ENCODE measurements at regions of chr22 and their contacts with region 1.

Region 1: DNA sequence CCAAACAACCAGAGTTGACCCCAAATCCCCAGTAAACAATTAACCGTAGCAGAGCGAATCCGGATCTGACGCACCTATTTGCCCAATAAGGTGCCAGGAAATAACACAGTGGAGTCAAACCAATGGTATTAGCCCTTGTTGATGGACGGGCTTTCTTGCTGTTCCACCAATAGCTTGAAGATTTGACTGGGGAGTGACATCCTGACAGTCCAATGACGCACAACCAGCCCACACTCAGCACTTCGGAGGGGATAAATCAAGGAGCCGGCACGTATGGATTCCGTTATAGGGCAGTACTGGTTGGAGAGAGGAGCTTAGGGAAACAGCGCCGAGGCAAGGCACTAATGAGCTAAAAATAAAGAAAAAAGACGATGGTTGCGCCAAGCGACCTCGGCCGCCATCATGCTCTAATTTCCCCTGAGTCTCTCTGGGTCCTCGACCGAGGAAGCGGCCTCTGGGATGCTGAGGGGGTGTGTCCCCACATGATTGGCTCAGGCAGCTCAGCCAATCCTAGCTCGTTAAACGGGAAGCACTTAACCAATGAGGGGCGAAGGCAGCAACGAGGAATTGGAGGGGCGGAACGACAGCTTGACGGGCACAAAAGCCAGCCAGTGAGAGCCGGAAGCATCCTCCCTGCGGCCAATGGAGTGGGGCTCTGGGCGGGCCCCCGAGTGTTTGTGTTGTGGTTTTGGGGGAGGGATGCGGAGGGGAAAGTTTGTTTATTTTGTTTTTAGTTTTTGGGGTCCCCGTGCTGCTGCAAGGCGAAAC is 49.5 kb downstream of the FAM83F start:
- DNase-seq: peak; percentile 94 to 99 (median 98)
- ATAC-seq: peak; percentile 84 to 89 (median 86)
- H3K4me3 ChIP-seq: peak overlapping the region; percentile 77 to 85
- H3K4me3 Mint-ChIP-seq: peak overlapping the region; percentile 90 to 96 (median 93)
- H3K27ac ChIP-seq: peak overlapping the region; percentile 96
- H3K27ac Mint-ChIP-seq: peak overlapping the region; percentile 100
- H3K4me1 ChIP-seq: peaks cover 18 to 31% of the 10 kb centered on the region in 2 experiments
- H3K4me1 Mint-ChIP-seq: peaks cover 38 to 40% (median 40%) of the 10 kb centered on the region in 3 donors
- H3K27me3 ChIP-seq: peaks cover 0 to 11% of the 10 kb centered on the region in 2 experiments
- H3K27me3 Mint-ChIP-seq: peaks cover 7% of the 10 kb centered on the region in 2 donors

Region 2: GRCh38 chr22:39520054-39520891 is 524.0 kb before region 1 on chr22 and contains the start of gene ATF4:
- CTCF ChIA-PET with region 1: interaction called in 1 of 2 experiments, 9 read pairs
- POLR2A ChIA-PET with region 1: interaction called in 1 of 2 experiments, 29 read pairs
- DNase-seq: peak; percentile 93 to 99 (median 96)
- ATAC-seq: peak; percentile 90 to 92 (median 91)
- H3K4me3 ChIP-seq: peak within 1 kb of the TSS; percentile 89 to 99
- H3K4me3 Mint-ChIP-seq: peak within 1 kb of the TSS; percentile 85 to 95 (median 94)
- H3K27ac ChIP-seq: peak within 1 kb of the TSS; percentile 83
- H3K27ac Mint-ChIP-seq: peak within 1 kb of the TSS; percentile 96 to 98
- H3K4me1 ChIP-seq: peaks cover 24 to 53% of the 10 kb centered on the region in 2 experiments
- H3K4me1 Mint-ChIP-seq: peaks cover 40 to 52% (median 51%) of the 10 kb centered on the region in 3 donors
- H3K27me3 ChIP-seq: no peaks in the 10 kb centered on the region
- H3K27me3 Mint-ChIP-seq: peaks cover 0 to 2% of the 10 kb centered on the region in 2 donors
- total RNA-seq, gene ATF4: 236 to 371 (median 327) TPM

Region 3: DNA sequence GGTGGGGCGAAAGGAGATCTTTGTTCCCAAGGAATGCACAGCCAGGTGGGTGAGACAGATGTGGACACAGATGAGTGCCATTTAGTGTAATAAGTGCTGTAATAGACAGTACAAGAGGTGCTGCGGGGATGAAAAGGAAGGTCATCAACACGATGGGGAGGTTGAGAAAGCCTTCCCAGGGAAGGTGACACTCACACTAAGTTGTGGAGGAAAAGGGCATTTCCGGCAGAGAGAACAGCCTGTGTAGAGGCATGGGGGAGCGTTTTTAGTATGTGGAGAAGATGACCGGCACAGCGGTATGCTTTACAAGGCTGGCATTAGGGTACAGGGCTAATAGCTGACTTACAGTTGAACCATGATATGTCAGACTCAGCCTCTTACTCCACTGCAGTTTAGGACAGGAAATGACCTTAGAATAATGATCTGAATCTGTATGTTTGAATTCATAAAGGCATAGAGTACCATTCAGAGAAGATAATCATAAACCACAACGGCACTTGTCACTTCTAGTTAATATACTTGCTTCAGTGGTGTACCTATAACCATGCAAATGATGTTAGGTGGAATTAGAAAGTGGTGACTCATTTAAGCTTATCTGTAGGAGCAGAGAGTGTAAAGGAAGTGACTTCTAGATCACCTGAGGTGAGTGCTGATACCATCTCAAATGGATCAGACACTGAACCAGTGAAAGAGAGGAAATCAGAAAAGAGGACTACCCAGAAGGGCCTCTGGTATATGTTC is 11.0 kb after region 1 on chr22:
- CTCF ChIA-PET with region 1: interaction called in 1 of 2 experiments, 8 read pairs
- POLR2A ChIA-PET with region 1: interaction called, 3 to 17 read pairs
- DNase-seq: peak in 4 of 35 experiments; percentile 6 to 69 (median 12)
- ATAC-seq: peak; percentile 90 to 96 (median 93)
- H3K4me3 ChIP-seq: peak overlapping the region in 1 of 2 donors; percentile 12
- H3K4me3 Mint-ChIP-seq: peak overlapping the region; percentile 61 to 77 (median 67)
- H3K27ac ChIP-seq: peak overlapping the region; percentile 37
- H3K27ac Mint-ChIP-seq: peak overlapping the region; percentile 87 to 92
- H3K4me1 ChIP-seq: peaks cover 50 to 57% of the 10 kb centered on the region in 2 experiments
- H3K4me1 Mint-ChIP-seq: peaks cover 82 to 88% (median 84%) of the 10 kb centered on the region in 3 donors
- H3K27me3 ChIP-seq: no peaks in the 10 kb centered on the region
- H3K27me3 Mint-ChIP-seq: no peaks in the 10 kb centered on the region

Region 4: DNA sequence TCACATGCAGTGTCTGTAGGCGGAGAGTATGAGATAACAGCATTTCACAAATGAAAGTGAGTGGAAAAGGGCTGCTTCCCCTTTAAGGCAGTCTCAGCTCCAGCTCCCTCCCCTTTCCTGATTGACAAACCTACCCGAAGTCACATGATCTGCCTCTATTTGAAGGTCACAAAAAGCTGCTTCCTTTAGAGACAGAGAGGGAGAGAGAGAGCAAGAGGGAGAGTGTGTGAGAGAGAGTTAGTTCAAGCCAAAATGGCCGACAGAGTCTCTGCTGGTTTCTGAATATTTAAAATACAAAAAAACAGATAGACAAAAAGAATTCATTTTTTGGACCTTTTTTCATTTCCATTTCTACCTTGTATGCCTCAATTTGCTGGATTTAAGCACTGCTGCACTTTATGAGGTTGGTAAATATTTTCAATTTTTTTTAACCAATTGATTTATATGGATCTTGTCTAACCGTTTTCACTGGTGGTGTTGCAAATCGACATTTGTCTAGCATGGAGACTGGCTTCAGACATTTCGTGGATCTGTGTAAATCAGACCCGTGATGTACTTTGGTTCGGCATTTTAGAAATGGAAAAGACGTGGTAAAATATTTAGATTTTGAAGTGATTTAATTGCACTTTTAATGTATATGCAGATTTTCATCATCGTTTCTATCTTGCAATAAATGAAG is 133.6 kb after region 1 on chr22 and contains the start of gene TNRC6B:
- CTCF ChIA-PET with region 1: interaction called in 1 of 2 experiments, 5 read pairs
- POLR2A ChIA-PET with region 1: interaction called in 1 of 2 experiments, 13 read pairs
- DNase-seq: peak; percentile 31 to 94 (median 73)
- ATAC-seq: peak; percentile 84 to 92 (median 90)
- H3K4me3 ChIP-seq: peak within 1 kb of the TSS; percentile 59 to 82
- H3K4me3 Mint-ChIP-seq: peak within 1 kb of the TSS; percentile 76 to 92 (median 86)
- H3K27ac ChIP-seq: peak within 1 kb of the TSS; percentile 57
- H3K27ac Mint-ChIP-seq: peak within 1 kb of the TSS; percentile 91
- H3K4me1 ChIP-seq: peaks cover 41 to 42% of the 10 kb centered on the region in 2 experiments
- H3K4me1 Mint-ChIP-seq: peaks cover 60 to 67% (median 67%) of the 10 kb centered on the region in 3 donors
- H3K27me3 ChIP-seq: no peaks in the 10 kb centered on the region
- H3K27me3 Mint-ChIP-seq: no peaks in the 10 kb centered on the region
- total RNA-seq, gene TNRC6B: 122 to 173 (median 143) TPM

Region 5: GRCh38 chr22:40346178-40347118 is 302.2 kb after region 1 on chr22 and contains the start of gene ADSL:
- CTCF ChIA-PET with region 1: interaction called in 1 of 2 experiments, 29 read pairs
- POLR2A ChIA-PET with region 1: interaction called in 1 of 2 experiments, 5 read pairs
- DNase-seq: peak; percentile 61 to 88 (median 76)
- ATAC-seq: peak; percentile 85 to 89 (median 87)
- H3K4me3 ChIP-seq: peak within 1 kb of the TSS; percentile 81 to 96
- H3K4me3 Mint-ChIP-seq: peak within 1 kb of the TSS; percentile 92 to 98 (median 97)
- H3K27ac ChIP-seq: peak within 1 kb of the TSS; percentile 85
- H3K27ac Mint-ChIP-seq: peak within 1 kb of the TSS; percentile 98 to 99
- H3K4me1 ChIP-seq: peaks cover 32 to 60% of the 10 kb centered on the region in 2 experiments
- H3K4me1 Mint-ChIP-seq: peaks cover 53 to 63% (median 58%) of the 10 kb centered on the region in 3 donors
- H3K27me3 ChIP-seq: no peaks in the 10 kb centered on the region
- H3K27me3 Mint-ChIP-seq: no peaks in the 10 kb centered on the region
- total RNA-seq, gene ADSL: 64.0 to 84.3 (median 75.1) TPM

Region 6: DNA sequence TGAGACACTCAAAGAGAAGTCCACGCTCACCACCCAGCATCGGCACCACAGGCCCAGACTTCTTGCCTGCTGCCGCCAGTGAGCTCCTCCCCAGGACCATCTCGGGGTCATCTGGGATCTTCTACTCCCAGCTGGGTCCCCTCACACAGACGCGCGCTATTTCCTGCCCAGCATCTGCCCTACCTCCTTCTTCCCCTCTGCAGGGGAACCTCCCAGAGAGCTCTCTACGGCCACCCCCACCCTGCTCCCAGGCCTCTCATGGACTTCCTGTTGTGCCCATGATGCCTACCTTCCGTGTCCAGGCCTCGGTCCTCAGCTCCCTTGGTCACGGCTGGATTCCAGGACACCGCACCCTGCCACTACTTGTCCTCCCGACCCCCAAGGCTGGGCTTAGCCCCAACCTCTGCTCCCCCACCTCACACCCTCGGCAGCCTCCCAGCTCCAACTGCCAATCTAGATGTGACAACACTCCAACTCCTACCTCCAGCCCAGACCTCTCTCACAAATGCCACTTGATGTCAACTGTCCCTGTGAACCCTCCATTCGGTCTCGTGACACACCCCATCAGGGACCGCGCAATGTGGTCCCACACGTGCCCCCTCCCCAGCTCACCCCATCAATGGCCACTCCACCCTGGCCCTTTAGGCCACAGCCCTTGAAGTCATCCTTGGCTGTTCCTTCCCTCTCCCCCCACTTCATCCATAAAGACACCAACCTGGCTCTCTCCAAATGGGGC is 371.4 kb after region 1 on chr22:
- CTCF ChIA-PET with region 1: no interaction called
- POLR2A ChIA-PET with region 1: interaction called in 1 of 2 experiments, 11 read pairs
- DNase-seq: peak in 2 of 35 experiments; percentile 20 to 36
- ATAC-seq: peak; percentile 36 to 66 (median 54)
- H3K4me3 ChIP-seq: no peak overlapping the region
- H3K4me3 Mint-ChIP-seq: peak overlapping the region in 1 of 3 donors; percentile 16
- H3K27ac ChIP-seq: peak overlapping the region; percentile 55
- H3K27ac Mint-ChIP-seq: peak overlapping the region; percentile 89 to 96
- H3K4me1 ChIP-seq: peaks cover 2 to 53% of the 10 kb centered on the region in 2 experiments
- H3K4me1 Mint-ChIP-seq: peaks cover 24 to 40% (median 36%) of the 10 kb centered on the region in 3 donors
- H3K27me3 ChIP-seq: no peaks in the 10 kb centered on the region
- H3K27me3 Mint-ChIP-seq: no peaks in the 10 kb centered on the region